MCF 10A (cell line): ENCODE measurements at regions of chr11 and their contacts with region 1.

Region 1: GRCh38 chr11:102341844-102342318 is 5.1 kb upstream of the BIRC2 start:
- DNase-seq: peak; percentile 91
- H3K4me3 Mint-ChIP-seq: no peak overlapping the region
- H3K27ac Mint-ChIP-seq: no peak overlapping the region
- H3K4me1 Mint-ChIP-seq: peaks cover 40% of the 10 kb centered on the region
- H3K27me3 Mint-ChIP-seq: no peaks in the 10 kb centered on the region
- CTCF ChIP-seq: peak; percentile 67

Region 2: DNA sequence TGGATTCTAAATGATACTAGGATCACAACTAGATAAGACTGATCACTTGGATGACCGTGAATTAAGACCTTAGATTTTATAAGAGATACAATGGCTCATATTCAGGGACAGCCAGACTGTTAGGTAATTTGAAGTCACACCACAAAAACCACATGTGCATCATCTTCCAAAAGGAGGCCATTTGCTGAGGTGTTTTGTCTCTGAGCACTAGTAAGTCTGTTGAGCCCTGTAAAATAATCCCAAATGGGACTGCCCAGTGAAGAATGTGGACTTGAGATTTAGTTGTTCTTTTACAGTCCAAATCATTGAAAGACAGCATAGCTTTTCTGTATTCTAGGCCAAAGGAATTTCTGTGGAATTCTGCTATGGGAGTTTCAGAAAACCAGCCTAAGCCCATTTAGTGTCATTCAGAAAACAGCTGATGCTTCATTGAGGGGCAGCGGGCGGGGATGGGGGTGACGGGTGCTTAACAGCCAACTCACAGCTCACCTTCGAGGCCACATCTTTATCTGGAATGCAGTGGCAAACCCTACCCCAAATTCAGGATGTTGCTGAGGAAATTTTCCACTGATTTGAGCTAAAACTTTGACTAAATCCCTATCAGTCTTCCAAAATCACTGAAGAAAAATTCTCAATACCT is 104.7 kb before region 1 on chr11:
- CTCF ChIA-PET with region 1: no interaction called
- POLR2A ChIA-PET with region 1: no interaction called
- intact Hi-C with region 1: no loop called
- DNase-seq: no peak
- H3K4me3 Mint-ChIP-seq: no peak overlapping the region
- H3K27ac Mint-ChIP-seq: peak overlapping the region; percentile 39
- H3K4me1 Mint-ChIP-seq: peaks cover 12% of the 10 kb centered on the region
- H3K27me3 Mint-ChIP-seq: no peaks in the 10 kb centered on the region
- CTCF ChIP-seq: no peak

Region 3: GRCh38 chr11:102287964-102288724 is 53.7 kb before region 1 on chr11:
- CTCF ChIA-PET with region 1: interaction called, 101 read pairs
- POLR2A ChIA-PET with region 1: interaction called, 36 read pairs
- intact Hi-C with region 1: loop called (anchors 1 kb)
- DNase-seq: peak; percentile 80
- H3K4me3 Mint-ChIP-seq: no peak overlapping the region
- H3K27ac Mint-ChIP-seq: no peak overlapping the region
- H3K4me1 Mint-ChIP-seq: peaks cover 19% of the 10 kb centered on the region
- H3K27me3 Mint-ChIP-seq: no peaks in the 10 kb centered on the region
- CTCF ChIP-seq: peak; percentile 63

Region 4: GRCh38 chr11:102306048-102306585 is 35.8 kb before region 1 on chr11:
- CTCF ChIA-PET with region 1: interaction called, 7 read pairs
- POLR2A ChIA-PET with region 1: interaction called, 19 read pairs
- intact Hi-C with region 1: loop called (anchors 5 kb)
- DNase-seq: peak; percentile 96
- H3K4me3 Mint-ChIP-seq: peak overlapping the region; percentile 50
- H3K27ac Mint-ChIP-seq: peak overlapping the region; percentile 99
- H3K4me1 Mint-ChIP-seq: peaks cover 54% of the 10 kb centered on the region
- H3K27me3 Mint-ChIP-seq: no peaks in the 10 kb centered on the region
- CTCF ChIP-seq: peak; percentile 17

Region 5: DNA sequence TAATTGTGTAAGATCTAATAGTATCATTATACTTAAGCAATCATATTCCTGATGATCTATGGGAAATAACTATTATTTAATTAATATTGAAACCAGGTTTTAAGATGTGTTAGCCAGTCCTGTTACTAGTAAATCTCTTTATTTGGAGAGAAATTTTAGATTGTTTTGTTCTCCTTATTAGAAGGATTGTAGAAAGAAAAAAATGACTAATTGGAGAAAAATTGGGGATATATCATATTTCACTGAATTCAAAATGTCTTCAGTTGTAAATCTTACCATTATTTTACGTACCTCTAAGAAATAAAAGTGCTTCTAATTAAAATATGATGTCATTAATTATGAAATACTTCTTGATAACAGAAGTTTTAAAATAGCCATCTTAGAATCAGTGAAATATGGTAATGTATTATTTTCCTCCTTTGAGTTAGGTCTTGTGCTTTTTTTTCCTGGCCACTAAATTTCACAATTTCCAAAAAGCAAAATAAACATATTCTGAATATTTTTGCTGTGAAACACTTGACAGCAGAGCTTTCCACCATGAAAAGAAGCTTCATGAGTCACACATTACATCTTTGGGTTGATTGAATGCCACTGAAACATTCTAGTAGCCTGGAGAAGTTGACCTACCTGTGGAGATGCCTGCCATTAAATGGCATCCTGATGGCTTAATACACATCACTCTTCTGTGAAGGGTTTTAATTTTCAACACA is 18.2 kb before region 1 on chr11:
- CTCF ChIA-PET with region 1: interaction called, 15 read pairs
- POLR2A ChIA-PET with region 1: interaction called, 13 read pairs
- intact Hi-C with region 1: no loop called
- DNase-seq: peak; percentile 61
- H3K4me3 Mint-ChIP-seq: peak overlapping the region; percentile 33
- H3K27ac Mint-ChIP-seq: no peak overlapping the region
- H3K4me1 Mint-ChIP-seq: peaks cover 31% of the 10 kb centered on the region
- H3K27me3 Mint-ChIP-seq: no peaks in the 10 kb centered on the region
- CTCF ChIP-seq: no peak

Region 6: DNA sequence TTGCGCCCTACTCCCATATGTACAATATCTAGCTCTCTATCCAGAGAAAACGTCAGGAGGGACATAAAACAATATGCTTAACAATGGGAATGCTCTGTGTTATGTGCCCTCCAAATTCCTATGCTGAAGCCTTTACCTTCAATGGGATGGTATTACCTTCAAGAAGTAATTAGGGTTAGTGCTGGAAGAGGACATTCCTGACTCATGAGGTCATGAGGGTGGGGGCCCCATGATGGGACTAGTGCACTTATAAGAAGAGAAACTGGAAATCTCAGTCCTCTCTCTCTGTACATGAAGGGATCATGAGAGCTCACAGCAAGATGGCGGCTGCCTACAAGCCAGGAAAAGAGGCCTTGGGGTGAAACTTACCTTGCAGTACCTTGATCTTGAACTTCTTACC is 263.0 kb after region 1 on chr11:
- CTCF ChIA-PET with region 1: interaction called, 16 read pairs
- POLR2A ChIA-PET with region 1: interaction called, 3 read pairs
- intact Hi-C with region 1: no loop called
- DNase-seq: no peak
- H3K4me3 Mint-ChIP-seq: no peak overlapping the region
- H3K27ac Mint-ChIP-seq: no peak overlapping the region
- H3K4me1 Mint-ChIP-seq: peaks cover 24% of the 10 kb centered on the region
- H3K27me3 Mint-ChIP-seq: no peaks in the 10 kb centered on the region
- CTCF ChIP-seq: no peak